CD8-positive, alpha-beta T cell (primary cell): ENCODE measurements at regions of chr9 and their contacts with region 1.

Region 1: GRCh38 chr9:28471261-28471660 is 898.0 kb upstream of the C9orf72 start:
- DNase-seq: no peak
- ATAC-seq: no peak
- H3K4me3 ChIP-seq: no peak overlapping the region
- H3K4me3 Mint-ChIP-seq: no peak overlapping the region
- H3K27ac ChIP-seq: no peak overlapping the region
- H3K27ac Mint-ChIP-seq: no peak overlapping the region
- H3K4me1 ChIP-seq: no peaks in the 10 kb centered on the region
- H3K4me1 Mint-ChIP-seq: no peaks in the 10 kb centered on the region
- H3K27me3 ChIP-seq: no peaks in the 10 kb centered on the region
- H3K27me3 Mint-ChIP-seq: no peaks in the 10 kb centered on the region
- CTCF ChIP-seq: no peak

Region 2: GRCh38 chr9:27785714-27786100 is 685.6 kb before region 1 on chr9:
- CTCF ChIA-PET with region 1: no interaction called
- POLR2A ChIA-PET with region 1: no interaction called
- intact Hi-C with region 1: no loop called
- DNase-seq: no peak
- ATAC-seq: no peak
- H3K4me3 ChIP-seq: no peak overlapping the region
- H3K4me3 Mint-ChIP-seq: no peak overlapping the region
- H3K27ac ChIP-seq: no peak overlapping the region
- H3K27ac Mint-ChIP-seq: no peak overlapping the region
- H3K4me1 ChIP-seq: no peaks in the 10 kb centered on the region
- H3K4me1 Mint-ChIP-seq: no peaks in the 10 kb centered on the region
- H3K27me3 ChIP-seq: no peaks in the 10 kb centered on the region
- H3K27me3 Mint-ChIP-seq: peaks cover 5% of the 10 kb centered on the region
- CTCF ChIP-seq: no peak

Region 3: GRCh38 chr9:28453918-28454317 is 17.3 kb before region 1 on chr9:
- CTCF ChIA-PET with region 1: no interaction called
- POLR2A ChIA-PET with region 1: no interaction called
- intact Hi-C with region 1: loop called in 1 of 2 experiments (anchors 2 kb)
- DNase-seq: no peak
- ATAC-seq: no peak
- H3K4me3 ChIP-seq: no peak overlapping the region
- H3K4me3 Mint-ChIP-seq: no peak overlapping the region
- H3K27ac ChIP-seq: no peak overlapping the region
- H3K27ac Mint-ChIP-seq: no peak overlapping the region
- H3K4me1 ChIP-seq: no peaks in the 10 kb centered on the region
- H3K4me1 Mint-ChIP-seq: no peaks in the 10 kb centered on the region
- H3K27me3 ChIP-seq: no peaks in the 10 kb centered on the region
- H3K27me3 Mint-ChIP-seq: no peaks in the 10 kb centered on the region
- CTCF ChIP-seq: no peak

Region 4: DNA sequence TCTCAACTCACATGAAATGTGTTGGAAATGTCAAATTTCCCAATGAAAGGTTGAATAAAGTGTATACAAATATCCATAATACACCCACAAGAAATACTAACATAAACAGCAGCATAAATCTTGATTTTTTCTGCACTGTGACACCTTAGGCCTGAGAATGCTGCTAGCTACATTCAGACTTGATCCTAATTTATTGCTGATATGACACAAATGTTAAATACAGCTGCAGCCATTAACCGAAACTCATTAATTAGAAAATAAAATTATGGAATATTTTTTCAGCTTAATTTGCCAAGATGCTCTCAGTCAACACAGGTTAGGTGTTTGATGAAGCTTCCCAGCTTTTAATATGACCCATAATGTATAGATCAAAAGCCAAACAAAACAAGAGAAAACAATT is 16.3 kb after region 1 on chr9:
- CTCF ChIA-PET with region 1: no interaction called
- POLR2A ChIA-PET with region 1: no interaction called
- intact Hi-C with region 1: no loop called
- DNase-seq: no peak
- ATAC-seq: no peak
- H3K4me3 ChIP-seq: no peak overlapping the region
- H3K4me3 Mint-ChIP-seq: no peak overlapping the region
- H3K27ac ChIP-seq: no peak overlapping the region
- H3K27ac Mint-ChIP-seq: no peak overlapping the region
- H3K4me1 ChIP-seq: no peaks in the 10 kb centered on the region
- H3K4me1 Mint-ChIP-seq: no peaks in the 10 kb centered on the region
- H3K27me3 ChIP-seq: no peaks in the 10 kb centered on the region
- H3K27me3 Mint-ChIP-seq: no peaks in the 10 kb centered on the region
- CTCF ChIP-seq: no peak

Region 5: GRCh38 chr9:30103647-30104394 is 1632.6 kb after region 1 on chr9:
- CTCF ChIA-PET with region 1: no interaction called
- POLR2A ChIA-PET with region 1: no interaction called
- intact Hi-C with region 1: loop called in 1 of 2 experiments (anchors 5 kb)
- DNase-seq: no peak
- ATAC-seq: no peak
- H3K4me3 ChIP-seq: no peak overlapping the region
- H3K4me3 Mint-ChIP-seq: no peak overlapping the region
- H3K27ac ChIP-seq: no peak overlapping the region
- H3K27ac Mint-ChIP-seq: no peak overlapping the region
- H3K4me1 ChIP-seq: no peaks in the 10 kb centered on the region
- H3K4me1 Mint-ChIP-seq: no peaks in the 10 kb centered on the region
- H3K27me3 ChIP-seq: no peaks in the 10 kb centered on the region
- H3K27me3 Mint-ChIP-seq: no peaks in the 10 kb centered on the region
- CTCF ChIP-seq: no peak